Activated naive CD8-positive, alpha-beta T cell treated with anti-CD3 and anti-CD28 coated beads, Interleukin-2, amount 10 ng/mL, durations not matched to agents 7 days and 5 days (primary cell): ENCODE measurements at regions of chr19 and their contacts with region 1.

Region 1: GRCh38 chr19:54387991-54388801 is 23.5 kb upstream of the LAIR1 start:
- DNase-seq: peak; percentile 64
- ATAC-seq: peak; percentile 73
- H3K4me3 Mint-ChIP-seq: peak overlapping the region; percentile 84
- H3K27ac Mint-ChIP-seq: peak overlapping the region; percentile 84
- H3K4me1 Mint-ChIP-seq: peaks cover 28% of the 10 kb centered on the region
- H3K27me3 Mint-ChIP-seq: peaks cover 7% of the 10 kb centered on the region

Region 2: GRCh38 chr19:54364775-54365257 is 23.4 kb before region 1 on chr19 and contains the start of gene LAIR1:
- POLR2A ChIA-PET with region 1: interaction called, 27 read pairs
- DNase-seq: peak; percentile 70
- ATAC-seq: peak; percentile 91
- H3K4me3 Mint-ChIP-seq: peak within 1 kb of the TSS; percentile 93
- H3K27ac Mint-ChIP-seq: peak within 1 kb of the TSS; percentile 97
- H3K4me1 Mint-ChIP-seq: peaks cover 51% of the 10 kb centered on the region
- H3K27me3 Mint-ChIP-seq: peaks cover 5% of the 10 kb centered on the region
- total RNA-seq, gene LAIR1: 75.0 to 79.2 TPM

Region 3: GRCh38 chr19:54373781-54374631 is 14.2 kb before region 1 on chr19:
- POLR2A ChIA-PET with region 1: interaction called, 25 read pairs
- DNase-seq: no peak
- ATAC-seq: no peak
- H3K4me3 Mint-ChIP-seq: peak overlapping the region; percentile 86
- H3K27ac Mint-ChIP-seq: no peak overlapping the region
- H3K4me1 Mint-ChIP-seq: peaks cover 71% of the 10 kb centered on the region
- H3K27me3 Mint-ChIP-seq: peaks cover 8% of the 10 kb centered on the region